GM12878 (cell line): ENCODE measurements at regions of chr2 and their contacts with region 1.

Region 1: GRCh38 chr2:157302492-157303099 is 23.0 kb downstream of the ERMN start:
- DNase-seq: peak; percentile 21
- ATAC-seq: peak; percentile 82
- H3K4me3 ChIP-seq: no peak overlapping the region
- H3K27ac ChIP-seq: no peak overlapping the region
- H3K4me1 ChIP-seq: no peaks in the 10 kb centered on the region
- H3K27me3 ChIP-seq: peaks cover 0 to 2% of the 10 kb centered on the region in 2 experiments; a peak in 2 of 4 replicates
- CTCF ChIP-seq: peak; percentile 55 to 71 (median 62)
- EP300 ChIP-seq: no peak
- POLR2A ChIP-seq: no peak
- RAD21 ChIP-seq: peak; percentile 93

Region 2: GRCh38 chr2:156826341-156826933 is 476.2 kb before region 1 on chr2:
- CTCF ChIA-PET with region 1: no interaction called
- POLR2A ChIA-PET with region 1: no interaction called
- RAD21 ChIA-PET with region 1: no interaction called
- SMC1A ChIA-PET with region 1: no interaction called
- in situ Hi-C with region 1: no loop called
- intact Hi-C with region 1: no loop called
- DNase-seq: no peak
- ATAC-seq: no peak
- H3K4me3 ChIP-seq: no peak overlapping the region
- H3K27ac ChIP-seq: no peak overlapping the region
- H3K4me1 ChIP-seq: no peaks in the 10 kb centered on the region
- H3K27me3 ChIP-seq: no peaks in the 10 kb centered on the region
- CTCF ChIP-seq: no peak
- EP300 ChIP-seq: no peak
- POLR2A ChIP-seq: no peak
- RAD21 ChIP-seq: no peak

Region 3: DNA sequence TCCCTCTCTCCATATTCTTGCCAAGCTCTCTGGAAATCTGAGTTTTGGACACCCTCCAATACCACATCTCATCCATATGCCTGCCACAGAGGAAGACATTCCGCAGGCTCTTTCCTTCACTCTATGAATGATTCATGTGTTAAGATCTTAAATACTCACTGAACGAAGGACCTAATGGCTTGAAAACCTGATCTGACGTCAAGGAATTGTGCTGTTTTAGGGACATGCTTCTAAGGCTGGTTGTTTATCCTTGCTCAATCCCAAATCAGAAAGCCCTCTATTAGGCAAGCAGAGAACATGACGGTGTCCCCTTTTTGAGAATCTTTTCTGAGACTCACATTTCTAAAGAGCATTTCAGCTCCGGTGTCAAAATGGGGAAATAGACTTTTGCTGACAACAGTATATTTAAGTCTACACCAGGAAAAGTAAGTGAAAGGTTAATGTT is 128.8 kb before region 1 on chr2:
- CTCF ChIA-PET with region 1: no interaction called
- POLR2A ChIA-PET with region 1: no interaction called
- RAD21 ChIA-PET with region 1: no interaction called
- SMC1A ChIA-PET with region 1: no interaction called
- in situ Hi-C with region 1: no loop called
- intact Hi-C with region 1: no loop called
- DNase-seq: no peak
- ATAC-seq: no peak
- H3K4me3 ChIP-seq: no peak overlapping the region
- H3K27ac ChIP-seq: no peak overlapping the region
- H3K4me1 ChIP-seq: no peaks in the 10 kb centered on the region
- H3K27me3 ChIP-seq: no peaks in the 10 kb centered on the region; a peak in 1 of 4 replicates
- CTCF ChIP-seq: no peak
- EP300 ChIP-seq: no peak
- POLR2A ChIP-seq: no peak
- RAD21 ChIP-seq: no peak

Region 4: GRCh38 chr2:157269922-157270321 is 32.7 kb before region 1 on chr2:
- CTCF ChIA-PET with region 1: interaction called, 17 read pairs
- POLR2A ChIA-PET with region 1: no interaction called
- RAD21 ChIA-PET with region 1: interaction called, 5 read pairs
- SMC1A ChIA-PET with region 1: interaction called, 6 read pairs
- in situ Hi-C with region 1: no loop called
- intact Hi-C with region 1: no loop called
- DNase-seq: no peak
- ATAC-seq: peak; percentile 79
- H3K4me3 ChIP-seq: no peak overlapping the region
- H3K27ac ChIP-seq: no peak overlapping the region
- H3K4me1 ChIP-seq: no peaks in the 10 kb centered on the region
- H3K27me3 ChIP-seq: no peaks in the 10 kb centered on the region
- CTCF ChIP-seq: no peak
- EP300 ChIP-seq: no peak
- POLR2A ChIP-seq: no peak
- RAD21 ChIP-seq: no peak

Region 5: DNA sequence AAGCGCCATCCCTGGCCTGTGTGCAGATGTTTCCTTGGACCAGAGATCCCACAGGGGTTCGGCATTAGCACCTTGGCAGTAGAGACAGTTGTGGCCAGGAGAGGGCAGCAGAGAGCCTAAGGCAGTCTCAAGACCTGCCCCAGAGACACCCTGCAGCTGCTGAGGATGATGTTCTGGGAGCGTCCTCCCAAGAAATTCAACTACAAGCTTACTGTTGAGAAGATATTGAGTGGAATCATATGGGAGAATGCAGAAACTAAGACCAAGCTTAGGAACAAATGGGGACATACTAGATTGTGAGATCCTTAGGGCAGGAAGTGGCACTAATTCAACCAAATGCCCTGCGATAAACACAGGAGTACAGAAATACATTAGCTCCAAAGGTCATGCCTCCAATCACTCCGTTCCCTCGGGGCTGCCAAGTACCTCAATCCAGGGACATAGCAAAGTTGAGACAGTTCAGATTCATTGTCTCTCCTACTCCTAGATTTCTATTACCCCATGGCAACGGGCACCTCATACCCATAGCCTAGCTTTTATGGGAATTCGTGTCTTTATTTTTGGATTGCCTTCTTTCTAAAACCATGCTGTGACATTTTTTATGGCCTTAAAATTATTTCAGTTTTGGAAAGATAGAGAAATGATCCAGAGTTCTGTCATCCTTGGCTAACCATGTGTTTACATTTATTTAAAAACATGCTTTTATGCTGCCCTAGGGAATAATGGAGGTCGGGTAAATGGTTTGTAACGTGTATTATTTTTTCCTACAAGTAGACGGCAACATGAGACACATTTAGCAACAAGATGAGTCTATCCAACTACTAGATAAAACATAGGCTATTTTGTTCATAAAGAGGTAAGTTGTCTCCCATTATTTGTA is 25.3 kb after region 1 on chr2:
- CTCF ChIA-PET with region 1: interaction called, 226 read pairs
- POLR2A ChIA-PET with region 1: interaction called, 6 read pairs
- RAD21 ChIA-PET with region 1: interaction called, 126 read pairs
- SMC1A ChIA-PET with region 1: interaction called, 138 read pairs
- in situ Hi-C with region 1: no loop called
- intact Hi-C with region 1: loop called (anchors 1 kb)
- DNase-seq: peak; percentile 68
- ATAC-seq: peak; percentile 99
- H3K4me3 ChIP-seq: no peak overlapping the region
- H3K27ac ChIP-seq: no peak overlapping the region
- H3K4me1 ChIP-seq: no peaks in the 10 kb centered on the region
- H3K27me3 ChIP-seq: no peaks in the 10 kb centered on the region
- CTCF ChIP-seq: peak; percentile 88 to 97 (median 96)
- EP300 ChIP-seq: no peak
- POLR2A ChIP-seq: no peak
- RAD21 ChIP-seq: peak; percentile 88

Region 6: GRCh38 chr2:157433394-157433793 is 130.8 kb after region 1 on chr2:
- CTCF ChIA-PET with region 1: interaction called, 16 read pairs
- POLR2A ChIA-PET with region 1: no interaction called
- RAD21 ChIA-PET with region 1: interaction called, 21 read pairs
- SMC1A ChIA-PET with region 1: interaction called, 9 read pairs
- in situ Hi-C with region 1: no loop called
- intact Hi-C with region 1: no loop called
- DNase-seq: no peak
- ATAC-seq: no peak
- H3K4me3 ChIP-seq: peak overlapping the region; percentile 35; the same call in 1 of the 2 replicates
- H3K27ac ChIP-seq: no peak overlapping the region
- H3K4me1 ChIP-seq: peaks cover 10% of the 10 kb centered on the region
- H3K27me3 ChIP-seq: no peaks in the 10 kb centered on the region
- CTCF ChIP-seq: no peak
- EP300 ChIP-seq: no peak
- POLR2A ChIP-seq: no peak
- RAD21 ChIP-seq: no peak

Region 7: GRCh38 chr2:157497638-157498314 is 195.2 kb after region 1 on chr2:
- CTCF ChIA-PET with region 1: interaction called, 174 read pairs
- POLR2A ChIA-PET with region 1: no interaction called
- RAD21 ChIA-PET with region 1: interaction called, 81 read pairs
- SMC1A ChIA-PET with region 1: interaction called, 155 read pairs
- in situ Hi-C with region 1: no loop called
- intact Hi-C with region 1: loop called (anchors 2 kb)
- DNase-seq: no peak
- ATAC-seq: peak; percentile 97
- H3K4me3 ChIP-seq: no peak overlapping the region
- H3K27ac ChIP-seq: no peak overlapping the region
- H3K4me1 ChIP-seq: no peaks in the 10 kb centered on the region
- H3K27me3 ChIP-seq: no peaks in the 10 kb centered on the region
- CTCF ChIP-seq: peak; percentile 72 to 87 (median 82)
- EP300 ChIP-seq: no peak
- POLR2A ChIP-seq: no peak
- RAD21 ChIP-seq: peak; percentile 86

Region 8: DNA sequence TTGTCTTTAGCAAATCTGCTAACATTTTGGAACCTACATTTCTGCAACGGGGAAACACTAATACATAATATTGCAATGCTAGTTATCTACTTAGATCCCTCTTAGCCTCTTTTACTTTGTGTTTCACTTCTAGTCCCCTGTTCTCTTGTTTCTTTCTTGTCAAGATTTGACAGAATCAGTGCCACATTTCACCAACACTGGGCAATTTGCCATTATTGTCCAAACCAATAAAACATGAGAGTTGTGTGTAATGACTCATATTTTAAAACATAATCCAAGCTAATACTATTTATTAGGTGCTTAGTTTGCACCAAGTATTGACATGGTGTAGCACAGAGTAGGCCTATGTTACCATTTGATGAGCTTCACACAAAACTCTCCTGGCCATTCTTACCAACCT is 359.8 kb after region 1 on chr2:
- CTCF ChIA-PET with region 1: no interaction called
- POLR2A ChIA-PET with region 1: no interaction called
- RAD21 ChIA-PET with region 1: no interaction called
- SMC1A ChIA-PET with region 1: no interaction called
- in situ Hi-C with region 1: no loop called
- intact Hi-C with region 1: no loop called
- DNase-seq: no peak
- ATAC-seq: no peak
- H3K4me3 ChIP-seq: no peak overlapping the region
- H3K27ac ChIP-seq: no peak overlapping the region
- H3K4me1 ChIP-seq: no peaks in the 10 kb centered on the region
- H3K27me3 ChIP-seq: peaks cover 0 to 1% of the 10 kb centered on the region in 2 experiments; a peak in 1 of 4 replicates
- CTCF ChIP-seq: no peak
- EP300 ChIP-seq: no peak
- POLR2A ChIP-seq: no peak
- RAD21 ChIP-seq: no peak

Region 9: DNA sequence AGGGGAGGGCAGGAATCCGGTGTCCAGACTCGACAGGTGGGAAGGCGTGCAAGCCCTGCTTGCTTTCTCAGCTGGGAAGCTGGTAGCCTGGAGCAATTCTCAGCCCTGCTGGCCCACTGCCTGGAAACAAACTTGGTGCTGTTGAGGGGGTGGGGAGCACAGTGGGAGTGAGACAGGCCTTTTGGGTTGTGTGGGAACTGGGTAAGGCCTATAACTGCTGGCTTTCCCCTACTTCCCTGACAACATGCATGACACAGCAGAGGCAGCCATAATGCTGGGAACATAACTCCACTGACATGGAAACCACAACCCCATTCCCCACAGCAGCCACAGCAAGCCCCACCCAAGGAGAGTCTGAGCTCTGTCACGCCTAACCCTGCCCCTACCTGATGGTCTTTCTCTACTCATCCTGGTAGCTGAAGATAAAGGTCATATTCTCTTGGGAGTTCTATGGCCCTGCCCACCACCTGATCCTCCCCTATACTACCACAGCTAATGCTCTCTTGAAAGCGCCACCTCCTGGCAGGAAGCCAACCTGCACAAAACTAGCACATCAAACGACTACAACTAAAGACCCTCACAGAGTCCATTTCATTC is 449.0 kb after region 1 on chr2:
- CTCF ChIA-PET with region 1: interaction called, 27 read pairs
- POLR2A ChIA-PET with region 1: no interaction called
- RAD21 ChIA-PET with region 1: interaction called, 4 read pairs
- SMC1A ChIA-PET with region 1: interaction called, 11 read pairs
- in situ Hi-C with region 1: loop called (anchors 10 kb)
- intact Hi-C with region 1: loop called (anchors 1 kb)
- DNase-seq: peak; percentile 36
- ATAC-seq: peak; percentile 79
- H3K4me3 ChIP-seq: no peak overlapping the region
- H3K27ac ChIP-seq: no peak overlapping the region
- H3K4me1 ChIP-seq: no peaks in the 10 kb centered on the region; the same call in 1 of the 2 replicates
- H3K27me3 ChIP-seq: no peaks in the 10 kb centered on the region
- CTCF ChIP-seq: peak; percentile 27 to 40 (median 38); a peak in 5 of 6 replicates
- EP300 ChIP-seq: no peak
- POLR2A ChIP-seq: no peak
- RAD21 ChIP-seq: peak; percentile 35; the same call in 1 of the 2 replicates

Region 10: DNA sequence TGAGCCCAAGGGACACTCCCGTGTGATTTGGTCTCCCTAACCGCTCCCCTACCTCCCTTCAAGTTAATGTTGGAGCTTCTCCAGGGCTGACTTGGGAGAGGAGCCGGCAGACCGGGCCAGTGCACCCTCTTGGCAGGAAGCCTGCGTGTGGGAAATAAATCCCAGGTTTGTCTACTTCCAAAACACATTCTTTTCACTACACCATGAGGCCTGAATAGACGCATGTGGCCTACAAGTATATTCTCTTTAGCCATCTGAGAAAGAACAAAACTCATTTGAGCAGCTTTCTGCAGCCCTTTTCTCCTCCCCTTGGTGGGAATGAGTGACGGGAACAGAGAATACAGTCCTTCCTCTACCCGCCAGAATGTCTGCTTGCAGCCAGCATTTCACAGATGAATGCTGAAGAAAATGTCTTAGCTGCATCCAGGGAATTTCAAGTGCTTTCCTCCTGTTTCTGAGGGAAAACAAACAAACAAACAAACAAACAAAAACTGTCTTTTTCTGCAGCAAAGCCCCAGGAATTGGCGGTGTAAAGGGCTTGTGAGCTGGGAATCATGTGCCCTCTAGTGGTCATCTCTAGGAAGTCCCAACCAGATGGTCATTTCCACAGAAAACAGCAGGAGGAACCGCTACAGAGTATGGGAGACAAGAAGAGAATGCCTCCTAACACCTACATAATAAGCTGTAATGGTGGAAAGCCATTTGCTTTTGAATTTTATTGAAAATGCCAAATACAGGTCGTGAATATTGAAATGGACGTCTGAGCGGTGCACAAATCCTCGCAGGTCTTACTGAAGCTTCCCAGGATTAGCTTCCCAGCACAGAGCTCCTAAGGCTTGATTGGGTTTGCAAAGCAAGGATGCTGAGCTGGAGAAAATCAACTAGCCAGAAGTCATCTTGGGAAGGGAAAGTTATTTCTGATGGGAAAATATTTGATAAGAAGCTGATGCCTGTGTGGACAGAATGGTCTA is 1451.3 kb after region 1 on chr2:
- CTCF ChIA-PET with region 1: interaction called, 8 read pairs
- POLR2A ChIA-PET with region 1: no interaction called
- RAD21 ChIA-PET with region 1: interaction called, 12 read pairs
- SMC1A ChIA-PET with region 1: interaction called, 3 read pairs
- in situ Hi-C with region 1: loop called (anchors 25 kb)
- intact Hi-C with region 1: loop called (anchors 5 kb)
- DNase-seq: no peak
- ATAC-seq: peak; percentile 95
- H3K4me3 ChIP-seq: no peak overlapping the region
- H3K27ac ChIP-seq: no peak overlapping the region
- H3K4me1 ChIP-seq: no peaks in the 10 kb centered on the region
- H3K27me3 ChIP-seq: no peaks in the 10 kb centered on the region
- CTCF ChIP-seq: peak; percentile 84 to 91 (median 85)
- EP300 ChIP-seq: no peak
- POLR2A ChIP-seq: no peak
- RAD21 ChIP-seq: peak; percentile 78